Mammary epithelial cell (primary cell): ENCODE measurements at regions of chr6 and their contacts with region 1.

Region 1: GRCh38 chr6:40419881-40420728 is 167.1 kb downstream of the LRFN2 start:
- DNase-seq: no peak
- H3K4me3 ChIP-seq: no peak overlapping the region
- H3K27ac ChIP-seq: no peak overlapping the region
- H3K4me1 ChIP-seq: peaks cover 4% of the 10 kb centered on the region
- H3K27me3 ChIP-seq: no peaks in the 10 kb centered on the region
- CTCF ChIP-seq: no peak

Region 2: DNA sequence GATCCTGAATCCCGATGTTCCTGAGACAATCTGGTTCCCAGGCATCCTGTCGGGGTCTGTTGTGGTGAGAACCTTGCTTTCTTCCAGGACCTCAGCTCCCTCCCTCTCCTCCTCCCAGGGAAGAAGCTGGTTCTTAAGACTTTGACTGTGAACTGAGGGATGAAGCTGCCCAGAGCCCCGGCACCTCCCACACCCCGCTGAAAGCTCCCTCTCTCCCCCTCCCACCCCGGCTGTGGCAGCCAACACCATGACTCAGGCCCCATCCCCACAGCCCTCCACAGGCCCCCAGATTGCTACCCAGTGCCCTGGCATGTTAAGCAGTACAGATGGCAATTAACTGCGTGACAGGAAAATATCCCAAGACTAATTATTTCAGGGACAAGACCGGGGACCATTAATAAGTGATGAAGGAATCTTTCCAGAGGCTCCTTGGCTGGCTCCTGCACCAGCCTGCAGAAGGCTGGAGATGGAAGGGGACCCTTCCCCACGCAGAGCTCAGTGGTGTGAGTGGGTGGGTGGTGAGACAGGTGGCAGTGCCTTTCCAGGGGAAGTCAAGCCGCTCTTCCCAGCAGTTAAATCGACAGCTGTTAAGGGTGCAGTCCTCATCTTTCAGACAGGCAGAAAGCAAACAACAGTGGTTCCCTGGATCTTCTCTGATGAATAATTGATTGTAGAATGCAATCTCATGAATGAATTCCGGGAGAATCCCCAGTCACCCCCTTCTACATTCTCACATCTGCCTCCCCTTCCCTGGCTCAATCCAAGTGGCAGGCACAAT is 70.8 kb before region 1 on chr6:
- CTCF ChIA-PET with region 1: no interaction called
- dilution Hi-C with region 1: no loop called
- in situ Hi-C with region 1: no loop called
- intact Hi-C with region 1: no loop called
- DNase-seq: no peak
- H3K4me3 ChIP-seq: no peak overlapping the region
- H3K27ac ChIP-seq: no peak overlapping the region
- H3K4me1 ChIP-seq: no peaks in the 10 kb centered on the region
- H3K27me3 ChIP-seq: no peaks in the 10 kb centered on the region
- CTCF ChIP-seq: no peak

Region 3: GRCh38 chr6:40466986-40467539 is 47.0 kb after region 1 on chr6:
- CTCF ChIA-PET with region 1: no interaction called
- dilution Hi-C with region 1: loop called (anchors 5 kb)
- in situ Hi-C with region 1: no loop called
- intact Hi-C with region 1: no loop called
- DNase-seq: no peak
- H3K4me3 ChIP-seq: no peak overlapping the region
- H3K27ac ChIP-seq: no peak overlapping the region
- H3K4me1 ChIP-seq: no peaks in the 10 kb centered on the region
- H3K27me3 ChIP-seq: peaks cover 6% of the 10 kb centered on the region
- CTCF ChIP-seq: no peak

Region 4: DNA sequence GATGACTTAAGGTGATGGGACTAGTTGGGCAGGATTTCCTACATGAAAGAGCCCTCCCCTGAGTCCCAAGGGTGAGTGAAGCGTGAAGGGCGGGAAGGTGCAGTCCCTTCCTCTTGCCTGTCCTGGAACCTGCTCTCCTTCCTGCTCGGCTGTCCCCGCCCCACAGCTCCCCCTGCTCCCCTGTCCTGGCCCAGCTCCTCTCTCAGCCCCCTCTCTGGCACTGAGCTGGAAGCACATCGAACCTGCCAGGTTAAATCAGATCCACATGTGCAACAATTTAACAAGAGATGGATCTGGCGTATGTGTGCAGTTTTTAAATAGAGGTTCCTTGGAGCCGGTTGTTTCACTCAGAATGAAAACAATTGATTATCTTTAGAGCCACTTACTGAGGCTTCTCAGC is 72.1 kb after region 1 on chr6:
- CTCF ChIA-PET with region 1: no interaction called
- dilution Hi-C with region 1: loop called (anchors 5 kb)
- in situ Hi-C with region 1: no loop called
- intact Hi-C with region 1: no loop called
- DNase-seq: no peak
- H3K4me3 ChIP-seq: no peak overlapping the region
- H3K27ac ChIP-seq: no peak overlapping the region
- H3K4me1 ChIP-seq: no peaks in the 10 kb centered on the region
- H3K27me3 ChIP-seq: peaks cover 2% of the 10 kb centered on the region
- CTCF ChIP-seq: no peak